ENCODE measurements at regions of chr11 and their contacts with region 1.

Region 1: GRCh38 chr11:22225190-22225589 is 32.3 kb downstream of the ANO5 start:
- DNase-seq: no peak
- H3K4me3 Mint-ChIP-seq: no peak overlapping the region
- H3K27ac Mint-ChIP-seq: no peak overlapping the region
- H3K4me1 Mint-ChIP-seq: no peaks in the 10 kb centered on the region
- H3K27me3 Mint-ChIP-seq: no peaks in the 10 kb centered on the region

Region 2: GRCh38 chr11:21896746-21897602 is 328.2 kb before region 1 on chr11:
- CTCF ChIA-PET with region 1: no interaction called
- intact Hi-C with region 1: no loop called
- DNase-seq: no peak
- H3K4me3 Mint-ChIP-seq: no peak overlapping the region
- H3K27ac Mint-ChIP-seq: no peak overlapping the region
- H3K4me1 Mint-ChIP-seq: no peaks in the 10 kb centered on the region
- H3K27me3 Mint-ChIP-seq: no peaks in the 10 kb centered on the region

Region 3: DNA sequence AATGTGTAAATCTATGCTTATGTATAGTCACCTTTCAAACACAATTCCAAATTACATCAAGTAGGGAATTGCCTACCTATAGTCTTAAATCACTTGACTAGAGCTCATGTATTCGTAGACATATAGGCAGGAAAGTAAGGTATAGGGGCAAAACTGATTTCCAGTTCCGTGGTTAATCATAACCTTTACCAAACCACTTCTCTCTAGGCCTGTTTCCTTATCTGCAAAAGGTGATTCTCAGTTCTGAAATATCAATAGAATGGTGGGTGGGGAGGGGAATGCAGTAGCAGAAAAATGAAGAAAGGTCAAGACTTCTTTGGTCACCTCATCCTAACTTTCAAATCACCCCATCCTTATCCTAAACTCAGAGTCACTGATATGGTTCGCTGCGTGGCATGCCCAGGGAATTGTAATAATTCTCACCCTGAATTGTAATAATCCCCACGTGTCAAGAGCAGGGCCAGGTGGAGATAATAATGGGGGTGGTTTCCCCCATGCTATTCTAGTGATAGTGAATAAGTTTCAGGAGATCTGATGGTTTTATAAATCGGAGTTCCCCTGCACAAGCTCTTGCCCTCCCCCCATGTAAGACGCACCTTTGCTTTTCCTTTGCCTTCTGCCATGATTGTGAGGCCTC is 34.2 kb before region 1 on chr11:
- CTCF ChIA-PET with region 1: no interaction called
- intact Hi-C with region 1: loop called (anchors 2 kb)
- DNase-seq: no peak
- H3K4me3 Mint-ChIP-seq: no peak overlapping the region
- H3K27ac Mint-ChIP-seq: no peak overlapping the region
- H3K4me1 Mint-ChIP-seq: peaks cover 8% of the 10 kb centered on the region
- H3K27me3 Mint-ChIP-seq: peaks cover 35% of the 10 kb centered on the region

Region 4: DNA sequence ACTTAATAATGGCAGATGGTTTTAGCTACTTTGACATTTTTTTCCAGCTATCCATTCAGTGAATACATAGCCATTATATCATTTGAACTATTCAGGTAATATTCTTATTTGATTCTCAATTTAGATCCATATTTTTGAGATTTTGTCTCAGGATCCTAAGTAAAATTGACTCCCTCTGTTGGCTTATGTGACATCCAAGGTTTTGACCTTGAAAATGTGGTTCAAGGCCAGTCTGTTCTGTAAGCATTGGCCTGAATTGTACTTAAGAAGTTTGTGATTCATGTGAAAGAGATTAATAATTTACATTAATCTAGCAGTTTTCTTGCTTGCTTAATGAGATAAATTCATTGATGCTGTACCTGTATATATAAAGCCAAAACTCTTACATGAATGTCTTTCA is 111.4 kb after region 1 on chr11:
- CTCF ChIA-PET with region 1: no interaction called
- intact Hi-C with region 1: no loop called
- DNase-seq: no peak
- H3K4me3 Mint-ChIP-seq: no peak overlapping the region
- H3K27ac Mint-ChIP-seq: no peak overlapping the region
- H3K4me1 Mint-ChIP-seq: peaks cover 20% of the 10 kb centered on the region
- H3K27me3 Mint-ChIP-seq: peaks cover 46% of the 10 kb centered on the region